PC-9 (cell line): ENCODE measurements at regions of chr4 and their contacts with region 1.

Region 1: GRCh38 chr4:185896823-185897488 is 85.0 kb upstream of the SORBS2 start:
- DNase-seq: peak; percentile 88 to 96
- H3K4me3 ChIP-seq: peak overlapping the region; percentile 14; the same call in 1 of the 2 replicates
- H3K27ac ChIP-seq: peak overlapping the region; percentile 97
- H3K4me1 ChIP-seq: peaks cover 28% of the 10 kb centered on the region
- H3K27me3 ChIP-seq: no peaks in the 10 kb centered on the region
- CTCF ChIP-seq: no peak

Region 2: GRCh38 chr4:185470501-185471195 is 426.3 kb before region 1 on chr4:
- CTCF ChIA-PET with region 1: no interaction called
- POLR2A ChIA-PET with region 1: no interaction called
- intact Hi-C with region 1: no loop called
- DNase-seq: peak; percentile 41 to 61
- H3K4me3 ChIP-seq: peak overlapping the region; percentile 73
- H3K27ac ChIP-seq: no peak overlapping the region
- H3K4me1 ChIP-seq: 0 out of 2 replicates have a peak, but pooled peaks cover 4% of the 10 kb centered on the region
- H3K27me3 ChIP-seq: no peaks in the 10 kb centered on the region
- CTCF ChIP-seq: no peak

Region 3: GRCh38 chr4:185640811-185641675 is 255.9 kb before region 1 on chr4:
- CTCF ChIA-PET with region 1: no interaction called
- POLR2A ChIA-PET with region 1: no interaction called
- intact Hi-C with region 1: loop called (anchors 2 kb)
- DNase-seq: peak in 1 of 2 experiments; percentile 38
- H3K4me3 ChIP-seq: no peak overlapping the region
- H3K27ac ChIP-seq: no peak overlapping the region
- H3K4me1 ChIP-seq: no peaks in the 10 kb centered on the region
- H3K27me3 ChIP-seq: no peaks in the 10 kb centered on the region
- CTCF ChIP-seq: peak; percentile 67

Region 4: DNA sequence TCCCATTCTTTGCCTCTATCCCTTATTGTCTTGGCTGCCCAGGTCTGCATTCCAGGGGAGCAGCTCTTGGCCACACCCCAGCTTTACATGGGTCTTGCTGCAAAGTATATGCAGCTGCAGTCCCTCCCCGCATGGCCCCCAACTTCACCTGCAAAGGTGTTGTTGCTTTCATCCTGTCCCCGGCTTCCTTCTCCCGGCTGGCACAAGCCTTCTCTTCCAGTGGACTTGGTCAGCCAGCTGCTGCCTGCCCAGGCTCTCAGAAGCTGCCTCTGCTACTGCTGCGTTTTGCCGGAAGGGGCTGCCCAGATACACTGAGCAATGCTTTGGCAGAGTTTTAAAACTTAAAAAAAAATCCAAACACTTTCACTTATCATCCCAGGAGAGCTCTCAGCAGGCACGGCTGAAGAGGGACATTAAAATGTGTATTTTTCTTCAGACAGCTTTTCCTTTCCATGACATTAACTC is 240.5 kb before region 1 on chr4:
- CTCF ChIA-PET with region 1: no interaction called
- POLR2A ChIA-PET with region 1: no interaction called
- intact Hi-C with region 1: no loop called
- DNase-seq: no peak
- H3K4me3 ChIP-seq: no peak overlapping the region
- H3K27ac ChIP-seq: no peak overlapping the region
- H3K4me1 ChIP-seq: no peaks in the 10 kb centered on the region
- H3K27me3 ChIP-seq: no peaks in the 10 kb centered on the region
- CTCF ChIP-seq: no peak

Region 5: GRCh38 chr4:185839194-185839712 is 57.7 kb before region 1 on chr4:
- CTCF ChIA-PET with region 1: interaction called, 4 read pairs
- POLR2A ChIA-PET with region 1: no interaction called
- intact Hi-C with region 1: loop called (anchors 2 kb)
- DNase-seq: peak; percentile 73 to 81
- H3K4me3 ChIP-seq: no peak overlapping the region
- H3K27ac ChIP-seq: peak overlapping the region; percentile 76
- H3K4me1 ChIP-seq: peaks cover 29% of the 10 kb centered on the region
- H3K27me3 ChIP-seq: no peaks in the 10 kb centered on the region
- CTCF ChIP-seq: no peak

Region 6: DNA sequence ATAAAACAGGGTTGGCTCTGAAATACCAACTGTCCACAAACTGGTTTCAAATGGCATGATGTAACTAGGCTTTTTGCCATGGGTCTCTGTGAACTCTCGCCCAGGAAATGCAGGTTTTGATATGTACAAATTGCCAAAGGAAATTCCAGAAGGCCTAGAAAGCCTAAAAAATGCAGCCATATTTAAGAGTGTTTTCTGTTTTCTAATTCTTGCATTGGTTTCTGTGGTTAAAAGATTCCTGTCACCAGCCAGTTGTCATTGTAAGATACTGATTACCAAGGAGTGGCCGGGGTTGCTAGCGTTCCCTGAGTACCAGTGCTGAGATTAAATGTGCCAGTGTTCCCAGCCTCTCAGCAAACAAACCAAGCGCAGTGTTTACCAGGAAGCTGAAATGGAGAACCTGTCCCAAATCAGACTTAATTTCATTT is 31.0 kb before region 1 on chr4:
- CTCF ChIA-PET with region 1: no interaction called
- POLR2A ChIA-PET with region 1: no interaction called
- intact Hi-C with region 1: loop called (anchors 1 kb)
- DNase-seq: peak; percentile 67 to 90
- H3K4me3 ChIP-seq: peak overlapping the region; percentile 1; the same call in 1 of the 2 replicates
- H3K27ac ChIP-seq: peak overlapping the region; percentile 96
- H3K4me1 ChIP-seq: peaks cover 34% of the 10 kb centered on the region
- H3K27me3 ChIP-seq: no peaks in the 10 kb centered on the region
- CTCF ChIP-seq: no peak

Region 7: DNA sequence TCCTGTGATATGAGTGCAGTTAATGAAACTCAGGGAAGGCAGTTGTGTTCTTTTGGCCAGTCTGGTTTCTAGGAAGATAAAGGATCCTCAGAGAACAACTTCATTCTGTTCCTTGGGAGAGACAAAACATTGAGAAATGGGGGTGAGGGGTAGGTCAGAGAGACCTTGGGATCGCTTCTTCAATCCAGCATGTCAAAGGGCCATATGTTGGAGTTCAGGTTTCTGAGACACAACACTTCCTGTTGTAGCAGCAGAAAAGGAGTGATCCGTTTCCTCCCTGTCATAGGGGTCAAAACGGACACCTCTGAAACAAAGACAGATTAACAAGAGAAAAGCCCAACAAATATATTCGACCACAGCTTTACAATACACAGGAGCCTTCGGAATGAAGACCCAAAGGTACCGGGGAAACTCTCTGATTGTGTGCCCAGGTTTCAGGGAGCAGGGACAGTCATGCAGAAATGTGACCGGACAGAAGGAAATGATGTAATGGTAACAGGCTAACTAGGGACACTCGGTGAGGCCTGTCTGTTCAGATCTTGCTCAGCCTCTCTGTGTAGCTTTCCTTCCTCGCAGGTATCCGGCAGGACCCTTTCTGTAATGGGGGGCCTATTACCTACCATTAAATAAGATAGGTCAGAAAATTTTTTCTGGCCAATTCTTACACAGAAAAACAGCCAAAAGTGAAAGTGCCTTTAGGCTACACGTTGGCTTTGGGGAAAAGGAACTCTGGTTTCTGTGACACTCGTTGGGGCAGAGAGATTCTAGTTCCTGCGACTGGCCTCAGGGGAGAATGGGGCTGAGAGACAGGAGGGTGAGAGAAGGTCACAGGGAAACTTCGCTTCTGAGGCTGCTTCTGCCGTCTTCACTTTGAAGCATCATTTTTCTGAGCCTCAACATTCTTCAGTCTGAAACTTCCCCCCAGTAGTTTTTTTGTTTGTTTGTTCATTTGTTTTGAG is 68.7 kb after region 1 on chr4:
- CTCF ChIA-PET with region 1: interaction called, 6 read pairs
- POLR2A ChIA-PET with region 1: no interaction called
- intact Hi-C with region 1: loop called (anchors 1 kb)
- DNase-seq: peak in 1 of 2 experiments; percentile 21
- H3K4me3 ChIP-seq: no peak overlapping the region
- H3K27ac ChIP-seq: peak overlapping the region; percentile 78; the same call in 1 of the 2 replicates
- H3K4me1 ChIP-seq: peaks cover 25% of the 10 kb centered on the region
- H3K27me3 ChIP-seq: no peaks in the 10 kb centered on the region
- CTCF ChIP-seq: no peak